Ascending aorta (tissue), 2 donors: ENCODE measurements at regions of chr10 and their contacts with region 1.

Region 1: GRCh38 chr10:33955676-33956075 is 621.2 kb upstream of the NRP1 start:
- DNase-seq: no peak
- H3K4me3 ChIP-seq: no peak overlapping the region
- H3K27ac ChIP-seq: no peak overlapping the region
- H3K4me1 ChIP-seq: no peaks in the 10 kb centered on the region
- H3K27me3 ChIP-seq: no peaks in the 10 kb centered on the region
- CTCF ChIP-seq: no peak

Region 2: GRCh38 chr10:33901166-33901565 is 54.5 kb before region 1 on chr10:
- intact Hi-C with region 1: loop called (anchors 5 kb)
- DNase-seq: no peak
- H3K4me3 ChIP-seq: no peak overlapping the region
- H3K27ac ChIP-seq: peak overlapping the region; percentile 5 to 44
- H3K4me1 ChIP-seq: peaks cover 3 to 8% of the 10 kb centered on the region in 2 donors
- H3K27me3 ChIP-seq: no peaks in the 10 kb centered on the region
- CTCF ChIP-seq: no peak